BJ (cell line): ENCODE measurements at regions of chr20 and their contacts with region 1.

Region 1: DNA sequence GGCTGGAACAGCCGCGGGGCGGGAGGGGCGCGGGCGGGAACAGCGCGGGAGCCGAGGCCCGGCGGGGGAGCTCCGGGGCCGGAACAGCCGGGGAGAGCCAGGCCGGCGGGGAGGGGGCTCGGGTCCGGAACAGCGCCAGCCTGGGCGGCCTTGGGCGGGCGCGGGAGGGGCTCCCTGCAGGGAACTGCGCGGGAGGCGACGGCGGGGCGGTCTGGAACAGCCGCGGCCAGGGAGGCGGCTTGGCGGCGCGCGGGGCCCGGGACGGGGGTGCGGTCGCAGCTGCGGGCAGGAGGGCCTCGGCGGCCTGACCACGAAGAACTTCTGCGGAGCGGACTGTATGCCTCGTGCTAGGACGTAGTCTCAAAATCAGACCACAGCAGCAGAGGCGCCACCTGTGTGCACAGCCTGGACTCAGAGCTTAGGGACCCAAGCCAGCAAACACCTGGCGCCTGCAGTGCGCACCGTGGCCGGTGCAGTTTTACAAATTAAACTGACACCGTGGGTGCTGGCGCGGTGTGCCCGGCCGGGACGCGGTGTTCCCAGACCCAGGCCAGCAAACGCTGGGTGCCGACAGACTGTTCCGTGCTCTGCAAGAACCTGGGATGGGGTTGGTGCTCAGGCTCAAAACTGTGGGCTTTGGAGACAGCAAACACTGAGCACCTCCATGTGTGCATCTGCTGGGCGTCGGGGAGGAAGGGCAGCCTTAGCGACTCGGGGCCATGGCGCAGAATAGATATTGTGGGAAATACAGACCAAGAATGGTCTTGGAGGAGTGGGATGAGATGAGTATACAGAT is 568 bp downstream of the ZNF341 start:
- DNase-seq: no peak
- H3K4me3 ChIP-seq: peak overlapping the region; percentile 51
- H3K27me3 ChIP-seq: no peaks in the 10 kb centered on the region
- CTCF ChIP-seq: no peak

Region 2: GRCh38 chr20:33433465-33434234 is 298.7 kb before region 1 on chr20:
- CTCF ChIA-PET with region 1: no interaction called
- POLR2A ChIA-PET with region 1: interaction called, 15 read pairs
- DNase-seq: no peak
- H3K4me3 ChIP-seq: no peak overlapping the region
- H3K27me3 ChIP-seq: no peaks in the 10 kb centered on the region
- CTCF ChIP-seq: no peak

Region 3: DNA sequence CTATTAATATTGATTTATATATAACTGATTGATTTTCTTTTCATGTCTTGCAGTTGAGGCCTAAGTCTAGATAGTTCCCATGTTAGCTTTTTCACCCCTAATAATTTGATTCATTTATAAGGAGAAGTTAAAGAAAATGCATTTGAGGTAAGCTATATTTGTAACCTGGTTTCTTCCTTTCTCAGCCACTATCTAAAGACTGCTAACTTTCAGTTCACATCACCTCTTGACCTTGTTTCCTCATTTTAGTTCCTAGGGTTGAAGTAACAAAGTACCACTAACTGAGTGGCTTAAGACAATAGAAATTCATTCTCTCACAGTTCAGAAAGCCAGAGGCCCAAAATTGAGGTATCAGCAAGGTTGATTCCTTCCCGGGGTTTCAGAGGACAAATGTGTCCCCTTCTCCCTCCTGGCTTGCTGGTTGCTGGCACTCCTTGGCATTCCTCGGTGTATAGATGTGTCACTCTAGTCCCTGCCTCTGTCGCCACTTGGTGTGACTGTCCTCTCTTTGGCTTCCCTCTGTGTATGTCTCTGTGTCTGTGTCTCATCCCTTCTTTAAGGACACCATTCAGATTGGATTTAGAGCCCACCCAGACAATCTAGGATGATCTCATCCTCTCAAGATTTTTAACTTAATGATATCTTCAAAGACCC is 126.1 kb before region 1 on chr20:
- CTCF ChIA-PET with region 1: no interaction called
- POLR2A ChIA-PET with region 1: no interaction called
- DNase-seq: no peak
- H3K4me3 ChIP-seq: no peak overlapping the region
- H3K27me3 ChIP-seq: no peaks in the 10 kb centered on the region
- CTCF ChIP-seq: no peak

Region 4: DNA sequence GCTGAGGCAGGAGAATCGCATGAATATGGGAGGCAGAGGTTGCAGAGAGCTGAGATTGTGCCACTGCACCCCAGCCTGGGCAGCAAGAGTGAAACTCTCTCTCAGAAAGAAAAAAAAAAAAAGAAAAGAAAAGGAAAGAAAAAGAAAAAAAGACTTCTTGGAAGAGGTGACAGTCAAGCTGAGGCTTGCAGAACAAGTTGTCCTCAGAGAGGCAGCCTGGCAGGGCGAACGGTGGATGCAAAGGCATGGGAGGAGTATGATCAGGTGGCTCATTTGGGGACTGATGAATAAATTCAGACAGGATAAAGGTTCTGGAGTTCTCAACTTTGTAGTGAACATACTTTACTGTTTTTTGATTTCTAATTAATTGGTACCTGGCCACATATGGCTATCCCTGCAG is 11.8 kb after region 1 on chr20:
- CTCF ChIA-PET with region 1: no interaction called
- POLR2A ChIA-PET with region 1: interaction called, 11 read pairs
- DNase-seq: no peak
- H3K4me3 ChIP-seq: no peak overlapping the region
- H3K27me3 ChIP-seq: no peaks in the 10 kb centered on the region
- CTCF ChIP-seq: no peak